Activated naive CD4-positive, alpha-beta T cell treated with anti-CD3 and anti-CD28 coated beads for 36 hours (primary cell): ENCODE measurements at regions of chr14 and their contacts with region 1.

Region 1: DNA sequence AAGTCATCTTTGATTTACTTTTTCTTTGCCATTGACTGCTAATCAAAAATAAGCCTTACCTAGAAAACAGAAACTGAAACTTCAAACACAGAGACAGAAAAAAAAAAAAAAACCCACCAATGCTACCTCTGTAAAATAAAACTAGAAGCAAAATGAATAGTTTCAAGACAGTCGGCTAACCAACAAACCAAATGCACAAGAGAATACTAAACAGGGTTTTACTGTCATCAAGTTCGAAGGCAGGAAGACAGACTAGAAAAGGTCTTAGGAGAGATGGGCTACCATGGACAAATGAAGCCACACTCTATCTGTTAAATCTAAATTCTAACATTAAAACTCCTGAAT is 59.5 kb downstream of the SEL1L start:
- DNase-seq: no peak
- H3K4me3 Mint-ChIP-seq: peak overlapping the region; percentile 55
- H3K27ac Mint-ChIP-seq: peak overlapping the region; percentile 92
- H3K4me1 Mint-ChIP-seq: peaks cover 60% of the 10 kb centered on the region
- H3K27me3 Mint-ChIP-seq: no peaks in the 10 kb centered on the region

Region 2: DNA sequence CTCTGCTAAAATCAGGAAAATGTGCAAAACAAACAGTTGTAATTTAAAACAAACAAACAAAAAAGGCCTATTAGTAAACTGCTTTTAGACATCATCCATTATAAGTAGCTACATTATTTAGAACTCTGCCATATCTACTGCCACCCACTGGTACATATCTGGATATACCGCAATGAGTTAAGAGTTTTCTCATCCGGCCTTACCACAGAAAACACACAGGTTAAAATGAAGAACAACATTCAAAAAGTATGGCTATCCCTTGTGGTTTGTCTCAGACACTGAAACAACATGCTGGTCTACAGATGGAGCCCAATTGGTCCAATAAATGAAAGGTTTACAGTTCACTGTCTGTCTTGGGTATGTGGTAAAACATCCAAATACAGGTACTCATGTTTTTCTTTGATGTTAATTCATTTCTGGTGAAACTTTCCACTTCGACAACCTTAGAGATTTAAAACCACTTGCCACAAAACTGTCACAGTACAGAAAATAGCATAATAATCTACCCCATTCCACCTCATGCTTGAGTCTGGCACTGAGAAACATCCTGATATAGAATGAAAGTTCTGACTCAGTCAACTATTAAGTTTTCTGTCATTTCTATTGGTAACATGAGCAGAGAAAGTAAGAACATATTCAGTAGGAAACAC is 886.9 kb before region 1 on chr14:
- CTCF ChIA-PET with region 1: no interaction called
- intact Hi-C with region 1: loop called (anchors 2 kb)
- DNase-seq: peak; percentile 9
- H3K4me3 Mint-ChIP-seq: no peak overlapping the region
- H3K27ac Mint-ChIP-seq: peak overlapping the region; percentile 39
- H3K4me1 Mint-ChIP-seq: peaks cover 14% of the 10 kb centered on the region
- H3K27me3 Mint-ChIP-seq: no peaks in the 10 kb centered on the region

Region 3: GRCh38 chr14:80930836-80931389 is 543.2 kb before region 1 on chr14:
- CTCF ChIA-PET with region 1: no interaction called
- intact Hi-C with region 1: loop called (anchors 1 kb)
- DNase-seq: peak; percentile 79
- H3K4me3 Mint-ChIP-seq: peak overlapping the region; percentile 33
- H3K27ac Mint-ChIP-seq: peak overlapping the region; percentile 73
- H3K4me1 Mint-ChIP-seq: peaks cover 23% of the 10 kb centered on the region
- H3K27me3 Mint-ChIP-seq: no peaks in the 10 kb centered on the region

Region 4: GRCh38 chr14:81093651-81094050 is 380.5 kb before region 1 on chr14:
- CTCF ChIA-PET with region 1: no interaction called
- intact Hi-C with region 1: no loop called
- DNase-seq: no peak
- H3K4me3 Mint-ChIP-seq: no peak overlapping the region
- H3K27ac Mint-ChIP-seq: no peak overlapping the region
- H3K4me1 Mint-ChIP-seq: no peaks in the 10 kb centered on the region
- H3K27me3 Mint-ChIP-seq: peaks cover 2% of the 10 kb centered on the region

Region 5: DNA sequence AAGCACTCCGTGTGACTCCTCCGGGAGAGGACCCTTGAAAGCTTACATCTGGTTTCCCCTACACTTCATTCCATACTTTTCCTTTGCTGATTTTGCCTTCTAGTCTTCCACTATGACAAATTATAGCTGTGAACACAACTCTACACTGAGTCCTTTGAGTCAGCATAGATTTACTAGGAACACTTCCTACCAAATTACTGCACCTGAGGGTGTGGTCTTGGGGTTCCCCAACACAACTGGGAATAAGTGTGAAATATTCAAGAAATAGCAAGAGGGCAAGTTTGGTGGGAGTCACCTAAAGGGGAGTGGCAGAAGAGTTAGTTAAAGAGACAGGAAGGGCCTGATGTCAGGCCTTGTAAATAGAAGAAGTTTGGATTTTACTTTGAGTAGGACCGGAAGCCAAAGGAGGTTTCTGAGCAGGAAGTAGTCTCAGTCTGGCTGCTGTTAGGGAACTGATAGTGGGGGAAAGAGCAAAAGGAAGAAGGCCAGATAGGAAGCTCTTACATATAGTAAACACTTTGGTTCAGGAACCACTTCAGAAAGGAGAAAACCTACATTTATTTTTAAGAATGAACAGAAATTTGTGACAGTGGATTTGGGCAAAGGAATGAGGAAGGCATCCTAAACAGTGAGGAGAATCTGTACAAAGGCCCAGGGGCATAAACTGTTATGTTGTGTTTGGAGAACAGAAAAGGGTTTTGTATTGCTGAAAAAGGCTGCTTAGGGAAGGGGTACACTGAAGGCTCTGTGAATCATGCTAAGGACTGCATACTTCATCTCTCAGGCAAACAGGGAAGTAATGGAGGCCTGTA is 45.3 kb after region 1 on chr14:
- CTCF ChIA-PET with region 1: interaction called, 3 read pairs
- intact Hi-C with region 1: loop called (anchors 1 kb)
- DNase-seq: peak; percentile 35
- H3K4me3 Mint-ChIP-seq: no peak overlapping the region
- H3K27ac Mint-ChIP-seq: peak overlapping the region; percentile 73
- H3K4me1 Mint-ChIP-seq: peaks cover 42% of the 10 kb centered on the region
- H3K27me3 Mint-ChIP-seq: no peaks in the 10 kb centered on the region

Region 6: DNA sequence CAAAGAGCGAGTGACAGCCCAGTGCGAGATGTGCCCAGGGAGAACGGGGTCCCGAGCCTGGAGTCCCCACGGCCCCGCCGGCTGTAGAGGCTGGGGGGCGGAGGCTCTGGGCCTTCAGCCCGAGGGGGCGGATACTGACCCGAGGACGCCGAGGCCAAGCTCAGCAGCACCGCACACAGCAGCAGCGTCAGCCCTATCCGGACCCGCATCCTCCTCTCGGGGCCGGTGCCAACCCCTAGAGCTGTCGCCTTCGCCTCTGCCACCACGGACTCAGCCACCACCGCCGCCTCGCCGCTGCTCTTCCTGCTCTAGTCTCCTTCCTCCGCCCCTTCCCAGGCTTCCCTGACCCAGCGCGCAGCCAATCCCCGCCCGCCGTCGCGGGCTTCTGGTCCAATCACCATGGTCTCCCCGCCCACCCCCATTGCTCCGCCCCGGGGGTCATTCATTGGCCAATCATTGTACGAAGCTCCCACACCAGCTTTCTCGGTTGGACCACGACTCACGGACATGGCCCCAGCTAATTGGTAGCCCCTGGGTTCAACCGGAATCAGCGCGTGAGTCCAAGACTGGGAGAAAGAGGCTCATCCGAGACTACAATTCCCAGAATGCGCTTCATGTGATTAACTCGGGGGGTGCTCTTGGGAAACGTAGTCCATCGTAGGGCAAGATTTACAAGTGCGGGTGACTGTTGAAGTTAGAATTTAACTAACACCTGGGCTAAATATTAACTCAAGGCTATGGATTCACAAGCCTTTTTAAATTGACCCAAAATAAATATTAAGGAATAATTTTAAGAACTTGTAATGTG is 59.6 kb after region 1 on chr14 and contains the start of gene SEL1L:
- CTCF ChIA-PET with region 1: no interaction called
- intact Hi-C with region 1: loop called (anchors 1 kb)
- DNase-seq: peak; percentile 100
- H3K4me3 Mint-ChIP-seq: peak within 1 kb of the TSS; percentile 88
- H3K27ac Mint-ChIP-seq: peak within 1 kb of the TSS; percentile 79
- H3K4me1 Mint-ChIP-seq: peaks cover 52% of the 10 kb centered on the region
- H3K27me3 Mint-ChIP-seq: no peaks in the 10 kb centered on the region
- total RNA-seq, gene SEL1L: 40.5 to 41.2 TPM

Region 7: GRCh38 chr14:81550001-81550637 is 76.0 kb after region 1 on chr14:
- CTCF ChIA-PET with region 1: no interaction called
- intact Hi-C with region 1: loop called (anchors 1 kb)
- DNase-seq: peak; percentile 10
- H3K4me3 Mint-ChIP-seq: no peak overlapping the region
- H3K27ac Mint-ChIP-seq: no peak overlapping the region
- H3K4me1 Mint-ChIP-seq: peaks cover 10% of the 10 kb centered on the region
- H3K27me3 Mint-ChIP-seq: peaks cover 14% of the 10 kb centered on the region

Region 8: GRCh38 chr14:81673930-81674329 is 199.8 kb after region 1 on chr14:
- CTCF ChIA-PET with region 1: no interaction called
- intact Hi-C with region 1: no loop called
- DNase-seq: no peak
- H3K4me3 Mint-ChIP-seq: no peak overlapping the region
- H3K27ac Mint-ChIP-seq: no peak overlapping the region
- H3K4me1 Mint-ChIP-seq: no peaks in the 10 kb centered on the region
- H3K27me3 Mint-ChIP-seq: peaks cover under 1% of the 10 kb centered on the region